ENCODE measurements at regions of chr21 and their contacts with region 1.

Region 1: GRCh38 chr21:41361786-41362604 is at the start of gene MX2:
- DNase-seq: peak; percentile 79
- H3K4me3 Mint-ChIP-seq: peak within 1 kb of the TSS; percentile 89
- H3K27ac Mint-ChIP-seq: peak within 1 kb of the TSS; percentile 98
- H3K4me1 Mint-ChIP-seq: peaks cover 56% of the 10 kb centered on the region
- H3K27me3 Mint-ChIP-seq: no peaks in the 10 kb centered on the region
- total RNA-seq, gene MX2: 8.2 and 9.4 TPM in 2 replicates

Region 2: GRCh38 chr21:41425954-41426675 is 64.1 kb after region 1 on chr21 and contains the start of gene MX1:
- intact Hi-C with region 1: loop called (anchors 1 kb)
- DNase-seq: peak; percentile 89
- H3K4me3 Mint-ChIP-seq: peak within 1 kb of the TSS; percentile 96
- H3K27ac Mint-ChIP-seq: peak within 1 kb of the TSS; percentile 96
- H3K4me1 Mint-ChIP-seq: peaks cover 82% of the 10 kb centered on the region
- H3K27me3 Mint-ChIP-seq: no peaks in the 10 kb centered on the region
- total RNA-seq, gene MX1: 89.4 and 92.8 TPM in 2 replicates

Region 3: GRCh38 chr21:41768437-41769061 is 406.6 kb after region 1 on chr21:
- intact Hi-C with region 1: loop called (anchors 5 kb)
- DNase-seq: peak; percentile 7
- H3K4me3 Mint-ChIP-seq: peak overlapping the region; percentile 72
- H3K27ac Mint-ChIP-seq: no peak overlapping the region
- H3K4me1 Mint-ChIP-seq: peaks cover 23% of the 10 kb centered on the region
- H3K27me3 Mint-ChIP-seq: peaks cover 62% of the 10 kb centered on the region